Activated T-helper 1 cell treated with anti-CD3 and anti-CD28 coated beads, Interleukin-12 subunit alpha, Interleukin-12 subunit beta, Interleukin-2, Interleukin-4 antibody, amounts not matched to agents 30 ng/mL and 10 ng/mL and 1 ng/mL, durations not matched to agents 14 hours and 24 hours and 36 hours (primary cell): ENCODE measurements at regions of chr9 and their contacts with region 1.

Region 1: DNA sequence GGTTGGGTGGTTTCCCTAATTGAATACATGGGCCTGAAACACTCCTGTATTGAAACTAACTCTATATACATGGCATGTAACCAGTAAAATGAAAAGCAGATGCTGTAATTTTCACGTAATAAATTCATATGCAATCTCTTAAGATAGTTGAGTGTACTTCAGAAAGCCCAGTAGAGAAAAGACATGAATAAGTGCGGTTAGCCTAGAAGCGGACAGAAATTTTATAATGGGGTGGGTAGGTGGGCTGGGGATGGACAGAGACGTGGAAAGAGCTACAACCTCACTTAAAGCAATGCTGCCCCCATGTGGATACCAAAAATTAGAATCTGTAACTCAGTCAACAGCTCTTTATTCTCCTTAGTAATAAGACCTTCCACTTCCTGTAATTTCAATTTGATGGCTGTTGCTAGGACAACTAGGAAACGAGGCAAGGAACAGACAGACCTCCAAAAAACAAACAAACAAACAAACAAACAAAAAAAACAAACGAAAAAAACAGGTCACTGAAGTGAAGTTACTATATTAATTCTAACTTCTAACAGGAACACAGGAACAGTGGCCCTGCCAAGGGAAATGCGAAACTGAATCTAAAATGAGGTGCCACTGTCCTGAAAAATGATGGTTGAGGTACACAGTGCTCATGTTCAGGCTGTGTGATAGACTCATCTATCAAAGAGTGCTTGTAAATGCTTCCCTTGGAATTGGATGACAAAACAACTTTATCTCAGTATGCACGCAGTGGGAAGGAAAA is 103.4 kb upstream of the GNA14 start:
- DNase-seq: no peak
- H3K4me3 Mint-ChIP-seq: no peak overlapping the region
- H3K27ac Mint-ChIP-seq: no peak overlapping the region
- H3K4me1 Mint-ChIP-seq: peaks cover 26% of the 10 kb centered on the region
- H3K27me3 Mint-ChIP-seq: no peaks in the 10 kb centered on the region

Region 2: DNA sequence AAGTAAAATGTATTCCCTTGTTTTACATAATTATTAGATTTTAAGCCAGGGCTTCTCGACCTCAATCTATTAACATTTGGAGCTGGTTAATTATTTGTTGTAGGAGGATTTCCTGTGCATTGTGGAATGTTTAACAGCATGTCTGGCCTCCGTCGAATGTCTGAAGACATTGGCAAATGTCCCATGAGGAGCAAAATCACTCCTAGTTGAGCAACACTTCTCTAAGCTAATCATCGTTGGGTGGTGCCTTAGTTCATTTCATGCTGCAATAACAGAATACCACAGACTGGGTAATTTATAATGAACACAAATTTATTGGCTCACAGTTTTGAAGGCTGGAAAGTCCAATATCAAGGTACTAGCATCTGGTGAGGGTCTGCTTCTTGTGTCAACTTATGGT is 587.6 kb before region 1 on chr9:
- intact Hi-C with region 1: loop called (anchors 2 kb)
- DNase-seq: no peak
- H3K4me3 Mint-ChIP-seq: no peak overlapping the region
- H3K27ac Mint-ChIP-seq: no peak overlapping the region
- H3K4me1 Mint-ChIP-seq: no peaks in the 10 kb centered on the region
- H3K27me3 Mint-ChIP-seq: peaks cover 9% of the 10 kb centered on the region

Region 3: DNA sequence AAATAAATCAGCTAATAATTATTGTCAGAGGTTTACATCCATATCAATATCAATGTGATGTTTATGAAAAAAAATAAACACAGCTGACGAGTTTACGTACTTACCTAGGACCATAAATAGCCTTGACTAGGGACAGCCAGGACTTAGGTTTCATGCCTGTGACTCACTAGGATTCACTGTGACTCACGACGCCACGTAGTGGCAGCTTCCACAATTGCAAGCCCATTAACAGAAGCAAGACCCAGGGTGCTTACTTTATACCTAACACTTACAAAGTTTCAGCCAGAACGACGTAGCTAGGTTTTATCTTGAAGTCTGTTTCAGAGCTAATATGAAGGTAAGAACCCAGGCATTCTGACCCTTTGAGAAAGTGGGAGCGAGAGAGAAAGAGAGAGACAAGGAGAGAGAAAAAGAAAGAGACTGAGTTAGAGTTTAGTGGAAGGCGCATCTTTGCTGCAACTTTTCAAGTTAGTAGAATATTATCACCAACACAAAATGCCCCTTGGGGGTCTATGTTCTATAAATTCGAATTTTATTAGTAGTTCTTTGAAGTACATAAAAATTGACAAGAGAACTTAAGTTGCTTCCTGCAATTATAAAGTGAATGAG is 294.6 kb before region 1 on chr9:
- intact Hi-C with region 1: loop called (anchors 1 kb)
- DNase-seq: peak; percentile 71
- H3K4me3 Mint-ChIP-seq: no peak overlapping the region
- H3K27ac Mint-ChIP-seq: no peak overlapping the region
- H3K4me1 Mint-ChIP-seq: peaks cover 25% of the 10 kb centered on the region
- H3K27me3 Mint-ChIP-seq: peaks cover 4% of the 10 kb centered on the region

Region 4: DNA sequence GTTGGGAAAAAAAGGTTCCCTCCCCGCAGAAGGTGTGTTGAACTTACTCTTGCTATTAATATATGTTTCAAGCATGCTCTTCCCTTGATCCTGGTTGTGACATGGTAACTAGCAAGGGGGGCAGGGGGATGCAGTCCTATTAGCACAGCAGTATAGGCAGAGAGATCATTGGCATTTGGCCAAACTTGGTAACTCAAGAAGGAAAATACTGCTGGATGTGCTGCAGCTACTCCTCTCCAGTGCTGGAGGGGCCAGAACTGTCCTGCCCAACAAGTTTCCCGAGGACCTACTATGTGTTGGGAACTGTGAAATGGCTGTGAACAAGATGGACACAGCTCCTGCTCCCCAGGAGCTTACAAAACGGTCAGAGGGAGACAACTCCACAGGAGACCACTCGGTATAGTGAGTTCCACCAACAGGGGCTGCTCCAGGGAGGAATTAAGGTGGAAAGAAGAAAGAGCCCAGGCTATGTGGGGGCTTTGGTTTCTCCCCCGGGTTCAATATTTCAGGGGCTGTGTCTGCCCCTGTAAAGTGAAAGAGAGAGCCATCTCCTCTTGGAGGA is 182.3 kb before region 1 on chr9:
- intact Hi-C with region 1: no loop called
- DNase-seq: no peak
- H3K4me3 Mint-ChIP-seq: no peak overlapping the region
- H3K27ac Mint-ChIP-seq: no peak overlapping the region
- H3K4me1 Mint-ChIP-seq: no peaks in the 10 kb centered on the region
- H3K27me3 Mint-ChIP-seq: no peaks in the 10 kb centered on the region

Region 5: GRCh38 chr9:77648234-77649120 is 103.0 kb before region 1 on chr9 and contains the start of gene GNA14:
- intact Hi-C with region 1: loop called (anchors 5 kb)
- DNase-seq: no peak
- H3K4me3 Mint-ChIP-seq: peak within 1 kb of the TSS; percentile 68
- H3K27ac Mint-ChIP-seq: peak within 1 kb of the TSS; percentile 23
- H3K4me1 Mint-ChIP-seq: peaks cover 4% of the 10 kb centered on the region
- H3K27me3 Mint-ChIP-seq: peaks cover 56% of the 10 kb centered on the region
- total RNA-seq, gene GNA14: not detected in 2 replicates

Region 6: GRCh38 chr9:77841739-77842386 is 90.3 kb after region 1 on chr9:
- intact Hi-C with region 1: loop called (anchors 1 kb)
- DNase-seq: no peak
- H3K4me3 Mint-ChIP-seq: no peak overlapping the region
- H3K27ac Mint-ChIP-seq: peak overlapping the region; percentile 45
- H3K4me1 Mint-ChIP-seq: peaks cover 27% of the 10 kb centered on the region
- H3K27me3 Mint-ChIP-seq: no peaks in the 10 kb centered on the region

Region 7: DNA sequence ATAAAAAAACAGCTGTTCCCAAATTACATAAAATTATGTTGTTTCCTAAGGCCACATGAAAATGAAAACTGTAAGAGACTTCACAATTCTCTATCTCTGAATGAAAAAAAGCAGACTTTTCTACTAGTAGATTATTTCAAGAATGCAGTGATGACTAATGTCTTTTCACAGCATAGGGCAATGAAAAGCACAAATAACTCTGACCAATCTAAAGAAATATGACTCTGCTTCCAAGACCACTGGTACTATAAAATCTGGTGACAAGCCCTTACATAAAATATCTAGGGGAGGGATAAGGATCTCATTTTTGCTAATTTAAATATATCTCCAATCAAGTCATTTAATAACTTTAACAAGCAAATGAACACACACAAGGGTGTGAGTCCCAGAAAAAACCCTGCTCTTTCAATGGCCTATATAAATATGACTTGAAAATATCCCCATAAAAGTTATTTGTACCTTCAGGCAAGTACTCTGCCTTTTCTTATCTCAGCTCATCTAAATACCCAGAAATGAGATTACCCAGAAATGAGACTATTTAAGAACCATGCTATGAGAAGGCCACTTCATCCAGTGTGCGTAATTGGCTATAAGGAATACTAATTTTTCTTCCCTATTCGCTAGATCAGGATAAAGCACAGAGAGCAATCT is 174.9 kb after region 1 on chr9:
- intact Hi-C with region 1: no loop called
- DNase-seq: no peak
- H3K4me3 Mint-ChIP-seq: no peak overlapping the region
- H3K27ac Mint-ChIP-seq: no peak overlapping the region
- H3K4me1 Mint-ChIP-seq: peaks cover 23% of the 10 kb centered on the region
- H3K27me3 Mint-ChIP-seq: no peaks in the 10 kb centered on the region